ENCODE measurements at regions of chr4 and their contacts with region 1.

Region 1: DNA sequence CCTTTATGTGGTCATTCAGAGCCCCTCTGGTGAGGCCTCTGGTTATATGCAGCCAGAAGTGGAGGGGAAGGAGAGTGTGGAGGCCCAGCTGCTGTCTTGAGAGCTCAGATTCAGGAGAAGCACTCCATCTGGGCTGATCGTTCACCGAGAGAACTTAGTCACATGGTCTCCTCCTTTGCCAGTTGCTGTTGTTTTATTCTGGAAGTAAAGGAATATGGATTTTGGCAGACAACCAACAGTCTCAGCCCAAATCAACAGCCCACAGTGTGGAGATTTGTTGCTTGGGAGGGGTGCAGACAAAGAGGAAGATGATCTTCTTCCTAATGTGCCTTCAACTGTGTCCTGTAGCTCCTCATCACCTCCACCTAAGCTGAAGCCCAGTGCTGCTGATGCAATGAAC is 355.4 kb downstream of the ANK2 start:
- DNase-seq: no peak

Region 2: GRCh38 chr4:113692809-113693411 is 288.1 kb after region 1 on chr4:
- intact Hi-C with region 1: loop called in 1 of 2 experiments (anchors 10 kb)
- DNase-seq: no peak